ENCODE measurements at regions of chr6 and their contacts with region 1.

Region 1: DNA sequence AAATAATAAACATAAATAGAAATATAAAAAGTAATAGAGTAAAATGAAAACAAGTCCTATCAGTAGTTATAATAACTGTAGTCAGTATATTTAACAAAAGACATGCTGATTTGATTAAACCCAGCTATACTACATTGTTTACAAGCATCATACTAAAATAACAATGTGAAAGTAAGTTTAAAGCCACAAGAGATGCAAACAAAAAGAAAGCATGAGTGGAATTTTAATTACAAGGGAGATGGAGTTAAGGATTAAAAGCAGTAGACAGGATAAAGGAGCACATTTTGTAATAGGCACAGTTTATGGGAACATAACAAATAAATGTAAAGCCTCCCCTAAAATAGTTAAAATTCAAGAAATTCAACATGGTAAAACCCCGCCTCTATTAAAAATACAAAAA is 41.5 kb downstream of the SENP6 start:
- DNase-seq: no peak
- H3K4me3 ChIP-seq: no peak overlapping the region
- H3K27ac ChIP-seq: no peak overlapping the region
- H3K4me1 ChIP-seq: no peaks in the 10 kb centered on the region
- H3K27me3 ChIP-seq: no peaks in the 10 kb centered on the region
- CTCF ChIP-seq: no peak

Region 2: DNA sequence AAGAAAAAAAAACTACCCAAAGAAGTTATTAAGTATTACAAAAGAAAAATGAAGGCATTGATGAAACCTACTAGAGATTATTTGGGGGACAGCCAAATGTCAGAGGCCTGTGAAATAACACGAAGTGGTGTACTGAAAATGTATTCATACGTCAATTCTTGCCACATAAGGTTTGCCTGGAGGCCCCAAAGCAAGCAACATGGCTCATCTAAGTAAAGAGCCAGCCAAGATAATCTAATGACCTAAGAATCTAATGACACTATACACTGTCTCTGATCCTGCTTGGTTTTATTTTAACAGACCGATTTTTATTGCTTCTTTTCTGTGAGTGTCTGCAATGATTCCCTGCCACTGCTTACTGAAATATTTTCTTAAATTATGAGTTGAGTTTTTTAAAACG is 184.3 kb before region 1 on chr6:
- CTCF ChIA-PET with region 1: no interaction called
- dilution Hi-C with region 1: no loop called
- in situ Hi-C with region 1: no loop called
- intact Hi-C with region 1: no loop called
- DNase-seq: peak; percentile 67
- H3K4me3 ChIP-seq: no peak overlapping the region
- H3K27ac ChIP-seq: no peak overlapping the region
- H3K4me1 ChIP-seq: no peaks in the 10 kb centered on the region
- H3K27me3 ChIP-seq: no peaks in the 10 kb centered on the region
- CTCF ChIP-seq: no peak

Region 3: DNA sequence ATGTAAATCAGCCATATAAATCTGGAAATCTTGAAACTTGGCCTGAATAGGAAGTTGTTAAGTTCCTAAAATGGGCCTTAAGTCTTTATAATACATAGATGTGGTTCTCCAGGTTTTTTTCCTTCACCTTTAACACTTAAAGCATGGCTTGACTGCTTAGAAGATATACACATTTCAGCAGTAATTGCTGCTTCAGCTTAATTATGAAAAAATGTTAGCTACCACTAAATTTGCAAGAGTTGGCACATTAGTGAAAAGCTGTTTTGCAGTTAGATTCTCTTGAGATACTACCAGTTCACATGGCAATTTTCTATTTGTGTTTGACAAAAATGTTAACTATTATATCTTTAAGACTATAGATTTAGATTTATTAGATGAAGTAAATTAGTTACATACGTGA is 33.2 kb after region 1 on chr6:
- CTCF ChIA-PET with region 1: no interaction called
- dilution Hi-C with region 1: loop called (anchors 5 kb)
- in situ Hi-C with region 1: no loop called
- intact Hi-C with region 1: no loop called
- DNase-seq: no peak
- H3K4me3 ChIP-seq: no peak overlapping the region
- H3K27ac ChIP-seq: no peak overlapping the region
- H3K4me1 ChIP-seq: no peaks in the 10 kb centered on the region
- H3K27me3 ChIP-seq: no peaks in the 10 kb centered on the region
- CTCF ChIP-seq: no peak

Region 4: GRCh38 chr6:75830959-75831885 is 188.0 kb after region 1 on chr6:
- CTCF ChIA-PET with region 1: no interaction called
- dilution Hi-C with region 1: no loop called
- in situ Hi-C with region 1: no loop called
- intact Hi-C with region 1: no loop called
- DNase-seq: peak; percentile 82
- H3K4me3 ChIP-seq: no peak overlapping the region
- H3K27ac ChIP-seq: no peak overlapping the region
- H3K4me1 ChIP-seq: peaks cover 4% of the 10 kb centered on the region
- H3K27me3 ChIP-seq: no peaks in the 10 kb centered on the region
- CTCF ChIP-seq: no peak

Measured in mammary epithelial cell (primary cell).